ENCODE measurements at regions of chr16 and their contacts with region 1.

Region 1: DNA sequence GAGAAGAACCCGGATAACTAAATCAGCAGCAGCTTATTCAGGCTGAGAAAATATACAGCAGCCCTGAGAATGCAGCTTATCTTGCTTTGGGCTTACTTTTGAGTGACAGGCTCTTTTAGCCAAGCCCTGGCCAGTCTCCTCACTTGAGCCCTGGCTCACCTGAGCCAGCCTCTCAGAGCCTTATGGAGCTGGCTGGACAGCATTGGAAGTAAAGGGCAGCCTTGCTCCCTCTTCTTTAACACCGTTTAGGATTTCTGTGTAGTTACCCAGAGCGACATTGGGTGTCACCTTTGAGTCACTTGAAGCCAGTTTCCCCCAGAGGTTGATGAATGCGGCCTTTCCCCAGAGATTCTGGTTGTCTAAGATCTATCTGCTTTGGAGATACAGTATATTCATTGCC is 7.7 kb upstream of the NPIPB2 start:
- DNase-seq: peak; percentile 78
- ATAC-seq: peak; percentile 91
- H3K4me3 ChIP-seq: no peak overlapping the region
- H3K4me3 Mint-ChIP-seq: no peak overlapping the region
- H3K27ac ChIP-seq: no peak overlapping the region
- H3K27ac Mint-ChIP-seq: peak overlapping the region; percentile 64
- H3K4me1 ChIP-seq: peaks cover 13 to 14% of the 10 kb centered on the region in 2 donors
- H3K4me1 Mint-ChIP-seq: peaks cover 9% of the 10 kb centered on the region
- H3K27me3 ChIP-seq: no peaks in the 10 kb centered on the region
- H3K27me3 Mint-ChIP-seq: no peaks in the 10 kb centered on the region
- CTCF ChIP-seq: peak; percentile 87

Region 2: DNA sequence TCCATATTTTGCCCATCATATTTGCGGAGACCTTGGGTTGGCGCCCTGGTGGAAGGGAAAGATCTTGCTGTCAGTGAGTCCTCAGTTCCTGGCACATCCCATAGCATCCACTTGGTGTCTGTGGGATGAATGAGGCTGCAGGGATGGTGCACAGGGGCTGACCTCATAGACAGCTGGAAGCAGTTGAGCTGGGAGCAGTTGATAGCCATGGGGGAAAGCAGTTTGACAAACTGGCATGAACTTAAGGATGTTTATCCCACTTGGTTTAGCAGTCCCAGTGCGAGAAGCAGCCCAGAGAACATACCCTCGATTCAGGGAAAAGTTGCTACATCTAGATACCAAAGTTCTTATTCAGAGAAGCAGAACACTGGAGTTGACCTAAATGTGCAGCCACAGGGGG is 107.7 kb after region 1 on chr16:
- CTCF ChIA-PET with region 1: interaction called, 11 read pairs
- POLR2A ChIA-PET with region 1: no interaction called
- intact Hi-C with region 1: no loop called
- DNase-seq: no peak
- ATAC-seq: no peak
- H3K4me3 ChIP-seq: no peak overlapping the region
- H3K4me3 Mint-ChIP-seq: no peak overlapping the region
- H3K27ac ChIP-seq: no peak overlapping the region
- H3K27ac Mint-ChIP-seq: peak overlapping the region; percentile 78
- H3K4me1 ChIP-seq: peaks cover 22 to 34% of the 10 kb centered on the region in 2 donors
- H3K4me1 Mint-ChIP-seq: peaks cover 36% of the 10 kb centered on the region
- H3K27me3 ChIP-seq: no peaks in the 10 kb centered on the region
- H3K27me3 Mint-ChIP-seq: no peaks in the 10 kb centered on the region
- CTCF ChIP-seq: no peak